Activated B cell treated with CpG ODN at 0.5 μM for 24 hours (primary cell): ENCODE measurements at regions of chr1 and their contacts with region 1.

Region 1: GRCh38 chr1:32107742-32108661 is at the start of gene KPNA6:
- DNase-seq: peak; percentile 78
- ATAC-seq: peak; percentile 83
- H3K4me3 Mint-ChIP-seq: peak within 1 kb of the TSS; percentile 99
- H3K27ac Mint-ChIP-seq: peak within 1 kb of the TSS; percentile 98
- H3K4me1 Mint-ChIP-seq: peaks cover 48% of the 10 kb centered on the region
- H3K27me3 Mint-ChIP-seq: no peaks in the 10 kb centered on the region
- CTCF ChIP-seq: no peak
- total RNA-seq, gene KPNA6: 58.7 and 60.3 TPM in 2 replicates

Region 2: GRCh38 chr1:32122151-32122550 is 14.1 kb after region 1 on chr1:
- CTCF ChIA-PET with region 1: interaction called, 6 read pairs
- POLR2A ChIA-PET with region 1: interaction called, 8 read pairs
- intact Hi-C with region 1: loop called (anchors 1 kb)
- DNase-seq: no peak
- ATAC-seq: peak; percentile 25
- H3K4me3 Mint-ChIP-seq: peak overlapping the region; percentile 47
- H3K27ac Mint-ChIP-seq: peak overlapping the region; percentile 54
- H3K4me1 Mint-ChIP-seq: peaks cover 55% of the 10 kb centered on the region
- H3K27me3 Mint-ChIP-seq: no peaks in the 10 kb centered on the region
- CTCF ChIP-seq: no peak

Region 3: GRCh38 chr1:32179443-32180185 is 71.6 kb after region 1 on chr1 and contains the start of gene TXLNA:
- CTCF ChIA-PET with region 1: interaction called, 4 read pairs
- POLR2A ChIA-PET with region 1: interaction called, 12 read pairs
- intact Hi-C with region 1: loop called (anchors 1 kb)
- DNase-seq: peak; percentile 89
- ATAC-seq: peak; percentile 91
- H3K4me3 Mint-ChIP-seq: peak within 1 kb of the TSS; percentile 90
- H3K27ac Mint-ChIP-seq: peak within 1 kb of the TSS; percentile 98
- H3K4me1 Mint-ChIP-seq: peaks cover 40% of the 10 kb centered on the region
- H3K27me3 Mint-ChIP-seq: no peaks in the 10 kb centered on the region
- CTCF ChIP-seq: no peak
- total RNA-seq, gene TXLNA: 52.0 and 54.1 TPM in 2 replicates

Region 4: GRCh38 chr1:32247983-32248889 is 140.2 kb after region 1 on chr1:
- CTCF ChIA-PET with region 1: interaction called, 3 read pairs
- POLR2A ChIA-PET with region 1: no interaction called
- intact Hi-C with region 1: loop called (anchors 5 kb)
- DNase-seq: peak; percentile 71
- ATAC-seq: peak; percentile 13
- H3K4me3 Mint-ChIP-seq: peak overlapping the region; percentile 45
- H3K27ac Mint-ChIP-seq: peak overlapping the region; percentile 81
- H3K4me1 Mint-ChIP-seq: peaks cover 70% of the 10 kb centered on the region
- H3K27me3 Mint-ChIP-seq: no peaks in the 10 kb centered on the region
- CTCF ChIP-seq: no peak

Region 5: DNA sequence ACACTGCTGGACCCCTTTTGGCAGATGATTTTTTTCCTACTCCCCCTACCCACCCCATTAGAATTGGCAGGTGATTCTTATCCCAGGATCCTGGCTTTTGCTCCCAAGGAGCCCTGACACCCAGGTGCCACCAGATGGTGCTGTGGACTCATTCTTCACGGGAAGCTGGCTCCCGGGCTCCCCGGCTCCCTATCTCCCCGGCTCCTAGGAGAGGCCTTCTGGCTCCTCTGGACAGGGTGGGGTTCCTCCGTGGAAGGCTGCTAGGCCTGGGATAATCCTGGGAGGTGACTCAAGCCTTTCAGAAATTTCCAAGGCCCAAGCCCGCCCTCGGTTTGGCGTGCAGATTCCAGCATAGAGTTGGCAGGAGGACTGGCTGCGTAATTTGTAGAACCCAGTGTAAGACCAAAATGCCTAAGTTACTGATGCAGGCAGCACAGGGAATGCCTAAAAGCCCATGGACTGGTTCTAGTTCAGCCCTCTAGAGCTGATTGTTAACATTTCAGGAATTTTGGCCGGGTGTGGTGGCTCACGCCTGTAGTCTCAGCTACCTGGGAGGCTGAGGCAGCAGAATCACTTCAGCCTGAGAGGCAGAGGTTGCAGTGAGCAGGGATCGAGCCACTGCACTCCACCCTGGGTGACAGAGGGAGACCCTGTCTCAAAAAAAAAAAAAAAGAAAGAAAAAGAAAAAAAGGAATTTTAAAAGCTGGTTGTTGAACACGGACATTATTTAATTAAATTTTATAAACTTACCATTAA is 293.1 kb after region 1 on chr1:
- CTCF ChIA-PET with region 1: no interaction called
- POLR2A ChIA-PET with region 1: interaction called, 20 read pairs
- intact Hi-C with region 1: no loop called
- DNase-seq: peak; percentile 51
- ATAC-seq: peak; percentile 83
- H3K4me3 Mint-ChIP-seq: no peak overlapping the region
- H3K27ac Mint-ChIP-seq: no peak overlapping the region
- H3K4me1 Mint-ChIP-seq: peaks cover 4% of the 10 kb centered on the region
- H3K27me3 Mint-ChIP-seq: no peaks in the 10 kb centered on the region
- CTCF ChIP-seq: peak; percentile 53

Region 6: GRCh38 chr1:32508751-32509140 is 400.7 kb after region 1 on chr1:
- CTCF ChIA-PET with region 1: no interaction called
- POLR2A ChIA-PET with region 1: no interaction called
- intact Hi-C with region 1: no loop called
- DNase-seq: no peak
- ATAC-seq: no peak
- H3K4me3 Mint-ChIP-seq: no peak overlapping the region
- H3K27ac Mint-ChIP-seq: no peak overlapping the region
- H3K4me1 Mint-ChIP-seq: no peaks in the 10 kb centered on the region
- H3K27me3 Mint-ChIP-seq: peaks cover 23% of the 10 kb centered on the region
- CTCF ChIP-seq: no peak